ENCODE measurements at regions of chr6 and their contacts with region 1.

Region 1: GRCh38 chr6:79777713-79778579 is 146.8 kb downstream of the SH3BGRL2 start:
- DNase-seq: peak; percentile 40
- ATAC-seq: peak; percentile 92
- H3K4me3 ChIP-seq: peak overlapping the region; percentile 58
- H3K27ac ChIP-seq: no peak overlapping the region
- H3K4me1 ChIP-seq: peaks cover 5% of the 10 kb centered on the region
- H3K27me3 ChIP-seq: no peaks in the 10 kb centered on the region
- CTCF ChIP-seq: peak; percentile 98 to 99 (median 98)
- EP300 ChIP-seq: no peak
- POLR2A ChIP-seq: no peak
- RAD21 ChIP-seq: peak; percentile 63

Region 2: GRCh38 chr6:79762370-79762769 is 15.6 kb before region 1 on chr6:
- CTCF ChIA-PET with region 1: interaction called, 10 read pairs
- POLR2A ChIA-PET with region 1: no interaction called
- RAD21 ChIA-PET with region 1: no interaction called
- SMC1A ChIA-PET with region 1: no interaction called
- in situ Hi-C with region 1: no loop called
- intact Hi-C with region 1: no loop called
- DNase-seq: no peak
- ATAC-seq: no peak
- H3K4me3 ChIP-seq: no peak overlapping the region
- H3K27ac ChIP-seq: no peak overlapping the region
- H3K4me1 ChIP-seq: no peaks in the 10 kb centered on the region
- H3K27me3 ChIP-seq: no peaks in the 10 kb centered on the region
- CTCF ChIP-seq: no peak; a peak in 1 of 6 replicates
- EP300 ChIP-seq: no peak
- POLR2A ChIP-seq: no peak
- RAD21 ChIP-seq: no peak

Region 3: DNA sequence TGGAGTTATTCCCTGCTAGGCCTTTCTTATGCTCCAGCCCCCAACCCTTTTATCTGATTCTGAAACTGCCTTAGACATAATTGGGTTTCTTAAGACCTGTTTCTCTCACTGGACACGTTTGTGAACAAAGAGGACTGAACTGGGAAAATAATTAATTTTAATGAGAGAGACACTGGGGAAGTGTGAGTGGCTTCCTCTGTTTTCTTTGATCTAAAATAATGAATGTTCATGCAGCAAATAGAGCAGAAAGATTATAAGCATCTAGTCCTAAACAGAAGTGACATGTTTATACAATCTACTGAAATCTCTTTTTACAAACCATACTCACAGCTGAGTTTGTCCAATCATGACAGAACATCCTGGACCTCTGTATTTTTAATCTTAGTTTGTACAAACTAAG is 10.8 kb after region 1 on chr6:
- CTCF ChIA-PET with region 1: interaction called, 13 read pairs
- POLR2A ChIA-PET with region 1: no interaction called
- RAD21 ChIA-PET with region 1: no interaction called
- SMC1A ChIA-PET with region 1: interaction called, 4 read pairs
- in situ Hi-C with region 1: no loop called
- intact Hi-C with region 1: no loop called
- DNase-seq: no peak
- ATAC-seq: no peak
- H3K4me3 ChIP-seq: no peak overlapping the region
- H3K27ac ChIP-seq: no peak overlapping the region
- H3K4me1 ChIP-seq: no peaks in the 10 kb centered on the region
- H3K27me3 ChIP-seq: no peaks in the 10 kb centered on the region; a peak in 1 of 4 replicates
- CTCF ChIP-seq: no peak
- EP300 ChIP-seq: no peak
- POLR2A ChIP-seq: no peak
- RAD21 ChIP-seq: no peak

Region 4: DNA sequence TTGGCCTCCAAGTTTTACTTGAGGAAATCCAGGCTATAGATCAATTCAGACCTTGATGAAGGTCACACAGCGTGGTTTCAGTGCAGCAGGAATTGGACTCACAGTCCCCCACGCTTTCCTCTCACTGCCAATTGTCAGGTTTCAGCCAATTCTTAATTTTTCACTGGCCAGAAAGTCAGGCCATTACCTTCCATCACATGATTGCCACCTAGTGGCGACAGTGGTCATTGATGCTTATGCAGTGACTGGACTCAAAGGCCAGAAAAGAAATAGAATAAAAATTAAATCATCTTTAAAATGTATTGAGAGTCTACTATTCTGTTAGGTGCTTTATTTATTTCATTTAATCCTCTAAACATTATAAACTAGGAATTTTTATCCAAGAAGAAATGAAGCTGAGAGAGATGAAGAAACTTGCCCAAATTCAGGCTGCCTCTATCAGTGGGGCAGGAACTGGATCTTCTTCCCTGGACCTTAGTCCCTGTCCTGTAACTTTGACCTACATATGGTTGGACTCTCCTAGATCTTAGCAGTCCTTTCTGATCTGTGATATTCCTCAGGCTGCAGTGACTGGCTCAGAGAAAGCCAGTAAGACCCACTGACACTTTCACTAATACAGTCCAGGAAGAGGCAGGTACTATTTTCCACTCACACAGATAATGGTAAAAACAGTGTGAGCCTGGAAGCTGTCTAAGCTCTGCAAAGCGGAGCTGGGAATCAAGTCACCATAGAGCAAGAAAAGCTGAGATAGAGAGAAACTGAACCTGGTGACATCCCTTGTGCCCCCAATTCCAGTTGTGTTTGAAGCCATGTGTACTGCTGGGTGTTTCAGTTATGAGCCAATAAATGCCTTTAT is 36.1 kb after region 1 on chr6:
- CTCF ChIA-PET with region 1: interaction called, 25 read pairs
- POLR2A ChIA-PET with region 1: no interaction called
- RAD21 ChIA-PET with region 1: no interaction called
- SMC1A ChIA-PET with region 1: interaction called, 5 read pairs
- in situ Hi-C with region 1: no loop called
- intact Hi-C with region 1: loop called (anchors 1 kb)
- DNase-seq: peak; percentile 16
- ATAC-seq: peak; percentile 96
- H3K4me3 ChIP-seq: no peak overlapping the region
- H3K27ac ChIP-seq: no peak overlapping the region
- H3K4me1 ChIP-seq: no peaks in the 10 kb centered on the region
- H3K27me3 ChIP-seq: no peaks in the 10 kb centered on the region
- CTCF ChIP-seq: peak; percentile 82 to 84 (median 83)
- EP300 ChIP-seq: no peak
- POLR2A ChIP-seq: no peak
- RAD21 ChIP-seq: peak; percentile 75

Region 5: GRCh38 chr6:79869600-79870084 is 91.7 kb after region 1 on chr6:
- CTCF ChIA-PET with region 1: interaction called, 15 read pairs
- POLR2A ChIA-PET with region 1: no interaction called
- RAD21 ChIA-PET with region 1: interaction called, 5 read pairs
- SMC1A ChIA-PET with region 1: interaction called, 7 read pairs
- in situ Hi-C with region 1: no loop called
- intact Hi-C with region 1: loop called (anchors 2 kb)
- DNase-seq: peak; percentile 19
- ATAC-seq: peak; percentile 100
- H3K4me3 ChIP-seq: no peak overlapping the region
- H3K27ac ChIP-seq: 0 out of 2 replicates have a peak overlapping the region, but pooled peaks have one; percentile 1
- H3K4me1 ChIP-seq: no peaks in the 10 kb centered on the region
- H3K27me3 ChIP-seq: no peaks in the 10 kb centered on the region
- CTCF ChIP-seq: peak; percentile 90 to 98 (median 95)
- EP300 ChIP-seq: no peak
- POLR2A ChIP-seq: peak; percentile 62; the same call in 1 of the 2 replicates
- RAD21 ChIP-seq: peak; percentile 46

Region 6: DNA sequence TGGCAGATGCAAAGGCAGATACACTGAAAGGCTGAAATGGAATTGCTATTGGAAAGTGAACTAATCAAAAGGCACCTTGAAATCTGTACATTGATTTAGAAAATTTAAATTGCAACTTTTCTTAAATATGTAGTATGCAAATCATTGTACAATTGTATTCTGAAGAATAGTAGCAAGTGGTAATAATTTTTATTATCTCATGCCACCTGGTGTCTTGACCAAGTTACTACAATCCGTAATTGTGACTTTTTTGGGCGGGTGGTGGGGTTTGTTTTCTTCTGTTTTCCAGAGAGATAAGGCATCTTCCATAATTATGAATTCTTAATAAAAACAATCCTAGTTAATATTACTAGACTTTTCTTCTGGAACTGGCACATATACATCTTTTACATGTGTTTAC is 316.1 kb after region 1 on chr6:
- CTCF ChIA-PET with region 1: no interaction called
- POLR2A ChIA-PET with region 1: no interaction called
- RAD21 ChIA-PET with region 1: no interaction called
- SMC1A ChIA-PET with region 1: no interaction called
- in situ Hi-C with region 1: no loop called
- intact Hi-C with region 1: loop called (anchors 10 kb)
- DNase-seq: no peak
- ATAC-seq: peak; percentile 58
- H3K4me3 ChIP-seq: no peak overlapping the region
- H3K27ac ChIP-seq: no peak overlapping the region
- H3K4me1 ChIP-seq: 0 out of 2 replicates have a peak, but pooled peaks cover 2% of the 10 kb centered on the region
- H3K27me3 ChIP-seq: no peaks in the 10 kb centered on the region
- CTCF ChIP-seq: peak; percentile 28 to 58 (median 46); a peak in 5 of 6 replicates
- EP300 ChIP-seq: no peak
- POLR2A ChIP-seq: no peak
- RAD21 ChIP-seq: peak; percentile 67